Sigmoid colon (tissue), 7 donors: ENCODE measurements at regions of chr6 and their contacts with region 1.

Region 1: GRCh38 chr6:157323255-157323965 is at the start of gene TMEM242:
- DNase-seq: peak; percentile 95
- H3K4me3 ChIP-seq: peak within 1 kb of the TSS; percentile 69 to 79 (median 75)
- H3K27ac ChIP-seq: peak within 1 kb of the TSS; percentile 93 to 96 (median 96)
- H3K4me1 ChIP-seq: peaks cover 0 to 18% (median 14%) of the 10 kb centered on the region in 4 donors
- H3K27me3 ChIP-seq: no peaks in the 10 kb centered on the region
- CTCF ChIP-seq: peak in 3 of 4 experiments; percentile 26 to 44 (median 32)
- EP300 ChIP-seq: no peak
- POLR2A ChIP-seq: peak; percentile 39 to 83
- total RNA-seq, gene TMEM242: 6.1 to 10.0 (median 7.7) TPM

Region 2: GRCh38 chr6:157379656-157380454 is 56.4 kb after region 1 on chr6:
- intact Hi-C with region 1: loop called (anchors 1 kb)
- DNase-seq: peak; percentile 94
- H3K4me3 ChIP-seq: peak overlapping the region; percentile 91 to 98 (median 92)
- H3K27ac ChIP-seq: peak overlapping the region; percentile 93 to 97 (median 95)
- H3K4me1 ChIP-seq: peaks cover 0 to 22% (median 12%) of the 10 kb centered on the region in 4 donors
- H3K27me3 ChIP-seq: no peaks in the 10 kb centered on the region
- CTCF ChIP-seq: no peak
- EP300 ChIP-seq: no peak
- POLR2A ChIP-seq: no peak

Region 3: DNA sequence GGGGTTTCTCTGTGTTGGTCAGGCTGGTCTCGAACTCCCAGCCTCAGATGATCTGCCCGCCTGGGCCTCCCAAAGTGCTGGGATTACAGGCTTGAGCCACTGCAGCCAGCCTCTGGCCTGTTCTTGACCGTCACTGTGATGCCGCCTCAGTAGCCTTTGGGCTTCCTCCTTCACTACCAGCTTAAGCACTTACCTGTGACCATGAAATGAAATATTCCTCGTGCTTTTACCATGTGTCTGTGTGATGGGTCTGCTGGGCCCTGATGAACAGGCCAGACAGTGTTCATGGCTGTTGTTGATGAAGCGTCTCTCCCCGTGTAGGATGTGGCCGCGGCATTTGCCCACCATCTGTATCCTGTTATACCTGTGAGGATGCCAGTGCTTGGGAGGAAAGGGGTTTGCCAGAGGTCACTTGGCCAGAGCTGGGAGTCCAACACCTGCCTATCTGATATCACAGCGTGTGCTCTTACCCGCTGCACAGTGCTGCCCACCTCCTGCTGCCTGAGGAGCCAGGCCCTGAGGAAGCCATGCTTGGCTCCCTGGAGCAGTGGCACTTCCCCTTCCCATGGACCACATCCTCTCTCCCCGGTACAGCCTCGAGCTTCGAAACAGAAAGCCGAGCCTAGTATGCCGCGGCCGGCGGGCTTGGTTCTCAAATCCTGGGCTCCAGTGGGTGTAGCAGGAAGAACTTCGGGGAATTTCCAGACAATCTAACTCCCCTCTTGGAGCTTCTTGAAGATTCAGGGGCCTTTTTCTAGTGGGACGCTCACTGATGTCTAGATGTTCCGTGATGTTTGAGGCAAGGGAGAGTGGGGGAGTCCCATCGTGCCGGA is 225.4 kb after region 1 on chr6:
- intact Hi-C with region 1: no loop called
- DNase-seq: no peak
- H3K4me3 ChIP-seq: no peak overlapping the region
- H3K27ac ChIP-seq: no peak overlapping the region
- H3K4me1 ChIP-seq: no peaks in the 10 kb centered on the region
- H3K27me3 ChIP-seq: no peaks in the 10 kb centered on the region
- CTCF ChIP-seq: no peak
- EP300 ChIP-seq: no peak
- POLR2A ChIP-seq: no peak

Region 4: GRCh38 chr6:157764178-157765033 is 441.0 kb after region 1 on chr6:
- intact Hi-C with region 1: loop called (anchors 10 kb)
- DNase-seq: peak; percentile 95
- H3K4me3 ChIP-seq: peak overlapping the region in 2 of 4 donors; percentile 6 to 9
- H3K27ac ChIP-seq: peak overlapping the region; percentile 41 to 90 (median 80)
- H3K4me1 ChIP-seq: peaks cover 0 to 52% (median 38%) of the 10 kb centered on the region in 4 donors
- H3K27me3 ChIP-seq: no peaks in the 10 kb centered on the region
- CTCF ChIP-seq: no peak
- EP300 ChIP-seq: peak in 1 of 4 donors; percentile 94
- POLR2A ChIP-seq: no peak